CD8-positive, alpha-beta T cell (primary cell): ENCODE measurements at regions of chrX and their contacts with region 1.

Region 1: GRCh38 chrX:69165087-69165651 is at the start of gene PJA1:
- DNase-seq: peak; percentile 48 to 83 (median 72)
- ATAC-seq: peak; percentile 75
- H3K4me3 ChIP-seq: peak within 1 kb of the TSS; percentile 74
- H3K4me3 Mint-ChIP-seq: peak within 1 kb of the TSS; percentile 92
- H3K27ac ChIP-seq: peak within 1 kb of the TSS; percentile 73 to 74
- H3K27ac Mint-ChIP-seq: peak within 1 kb of the TSS; percentile 93
- H3K4me1 ChIP-seq: peaks cover 30% of the 10 kb centered on the region
- H3K4me1 Mint-ChIP-seq: peaks cover 35% of the 10 kb centered on the region
- H3K27me3 ChIP-seq: no peaks in the 10 kb centered on the region
- H3K27me3 Mint-ChIP-seq: no peaks in the 10 kb centered on the region
- CTCF ChIP-seq: no peak
- total RNA-seq, gene PJA1: 36.5 to 38.7 TPM

Region 2: GRCh38 chrX:68498508-68499379 is 666.4 kb before region 1 on chrX and contains the start of gene YIPF6:
- CTCF ChIA-PET with region 1: no interaction called
- POLR2A ChIA-PET with region 1: no interaction called
- intact Hi-C with region 1: loop called in 1 of 2 experiments (anchors 2 kb)
- DNase-seq: peak; percentile 35 to 81 (median 52)
- ATAC-seq: peak; percentile 84
- H3K4me3 ChIP-seq: peak within 1 kb of the TSS; percentile 88 to 93
- H3K4me3 Mint-ChIP-seq: peak within 1 kb of the TSS; percentile 97
- H3K27ac ChIP-seq: peak within 1 kb of the TSS; percentile 87 to 98
- H3K27ac Mint-ChIP-seq: peak within 1 kb of the TSS; percentile 97
- H3K4me1 ChIP-seq: peaks cover 6% of the 10 kb centered on the region
- H3K4me1 Mint-ChIP-seq: peaks cover 38% of the 10 kb centered on the region
- H3K27me3 ChIP-seq: no peaks in the 10 kb centered on the region
- H3K27me3 Mint-ChIP-seq: peaks cover 3% of the 10 kb centered on the region
- CTCF ChIP-seq: no peak
- total RNA-seq, gene YIPF6: 7.8 to 10.4 TPM

Region 3: DNA sequence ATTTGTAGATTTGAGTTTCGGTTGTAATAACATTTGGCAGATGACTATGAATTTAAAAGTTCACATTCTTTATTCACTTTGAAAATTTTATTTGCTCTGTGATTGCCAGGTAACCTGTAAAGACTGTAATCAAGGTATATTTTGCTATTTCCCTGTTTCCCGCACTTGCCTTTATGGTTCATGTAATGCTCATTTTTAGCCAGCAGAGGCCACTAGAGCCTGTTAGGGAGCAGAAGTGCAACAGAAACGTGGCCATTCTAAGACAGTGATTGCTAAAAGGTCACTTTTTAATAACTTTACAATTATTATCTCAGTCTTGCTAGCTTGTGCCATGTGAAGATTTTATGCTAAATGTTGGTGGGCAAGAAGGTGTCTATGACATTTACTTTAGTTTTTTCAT is 653.9 kb before region 1 on chrX:
- CTCF ChIA-PET with region 1: no interaction called
- POLR2A ChIA-PET with region 1: no interaction called
- intact Hi-C with region 1: loop called in 1 of 2 experiments (anchors 5 kb)
- DNase-seq: peak in 3 of 9 experiments; percentile 33 to 57 (median 49)
- ATAC-seq: peak; percentile 39
- H3K4me3 ChIP-seq: no peak overlapping the region
- H3K4me3 Mint-ChIP-seq: no peak overlapping the region
- H3K27ac ChIP-seq: no peak overlapping the region
- H3K27ac Mint-ChIP-seq: no peak overlapping the region
- H3K4me1 ChIP-seq: peaks cover 3% of the 10 kb centered on the region
- H3K4me1 Mint-ChIP-seq: peaks cover 27% of the 10 kb centered on the region
- H3K27me3 ChIP-seq: no peaks in the 10 kb centered on the region
- H3K27me3 Mint-ChIP-seq: no peaks in the 10 kb centered on the region
- CTCF ChIP-seq: peak; percentile 73